Posterior vena cava (tissue), 2 donors: ENCODE measurements at regions of chr6 and their contacts with region 1.

Region 1: GRCh38 chr6:63635588-63636517 is at the start of gene PHF3:
- DNase-seq: peak; percentile 96
- total RNA-seq, gene PHF3: 41.0 to 44.8 TPM

Region 2: DNA sequence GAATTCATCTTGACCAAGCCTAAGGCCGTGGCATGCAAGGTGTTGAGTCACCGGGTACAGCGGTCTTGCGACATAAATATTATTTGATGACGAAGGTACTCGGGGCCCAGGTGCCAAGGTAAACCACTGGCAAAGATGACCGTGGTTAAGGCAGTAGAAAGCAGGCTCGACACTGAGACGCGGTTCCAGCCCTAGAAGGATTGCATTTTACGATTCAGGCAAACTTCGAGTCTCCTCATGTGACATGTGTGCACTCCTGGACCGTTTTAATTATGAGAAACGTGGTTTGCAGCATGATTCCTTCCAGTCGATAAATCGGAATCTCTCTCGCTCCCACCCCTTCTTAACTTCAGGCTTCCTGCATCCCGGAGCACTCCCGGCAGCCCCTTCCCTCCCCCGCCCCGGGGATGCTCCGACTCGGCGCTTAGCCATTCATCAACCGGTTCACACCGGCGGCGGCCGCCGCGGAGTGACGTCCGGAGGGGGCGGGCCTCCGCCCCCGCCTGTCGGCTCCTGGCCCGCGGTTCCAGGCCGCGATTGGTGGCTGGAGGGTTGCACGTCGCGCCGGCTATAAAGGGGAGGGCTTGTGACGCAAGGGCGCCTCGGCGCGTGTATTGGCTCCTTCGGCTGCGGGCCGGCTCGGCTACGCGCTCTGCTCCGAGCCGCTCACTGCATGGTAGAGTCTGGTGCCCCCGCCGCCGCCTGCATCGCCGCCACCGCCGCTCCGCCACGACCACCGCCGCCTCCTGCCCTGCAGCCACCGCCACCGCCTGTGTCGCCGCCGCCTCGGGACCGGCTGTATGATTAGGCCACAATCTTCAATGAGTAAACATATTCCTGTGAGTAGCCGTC is 63.7 kb before region 1 on chr6 and contains the starts of genes LOC128125822 and PTP4A1:
- intact Hi-C with region 1: loop called in 1 of 2 experiments (anchors 10 kb)
- DNase-seq: peak; percentile 100
- total RNA-seq, gene PTP4A1: 18.2 to 27.5 TPM

Region 3: DNA sequence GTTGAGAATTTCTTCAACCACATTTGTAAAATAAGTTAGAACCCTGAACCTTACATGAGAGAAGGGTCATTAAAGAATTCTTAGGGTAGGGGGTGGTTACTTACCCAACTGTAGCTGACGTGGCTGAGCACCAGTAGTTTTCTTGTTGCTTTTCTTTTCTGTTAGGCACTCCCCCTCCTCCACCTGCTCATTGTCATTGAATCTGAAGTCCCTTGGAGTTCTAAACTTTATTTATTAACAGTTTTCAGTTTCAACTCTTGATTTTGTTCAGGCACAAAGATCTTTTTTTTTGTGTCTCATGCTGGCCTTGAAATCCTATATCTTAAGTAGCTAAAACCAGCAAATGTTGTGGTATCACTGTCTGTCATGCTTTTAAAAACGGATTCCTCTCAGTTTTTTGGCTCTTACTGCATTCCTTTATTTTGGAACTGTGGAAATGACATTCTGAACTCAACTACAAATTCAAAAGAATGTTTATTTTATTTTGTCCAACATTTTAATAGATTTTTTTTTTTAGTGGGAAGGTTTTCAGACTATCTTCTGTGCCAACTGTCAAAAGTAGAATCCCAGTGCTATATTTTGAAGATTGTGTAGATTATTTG is 464.9 kb after region 1 on chr6:
- intact Hi-C with region 1: no loop called
- DNase-seq: no peak